Common myeloid progenitor, CD34-positive (primary cell): ENCODE measurements at regions of chr7 and their contacts with region 1.

Region 1: GRCh38 chr7:37719077-37719476 is 35.5 kb downstream of the GPR141 start:
- DNase-seq: no peak
- H3K4me3 ChIP-seq: no peak overlapping the region
- H3K27ac ChIP-seq: no peak overlapping the region
- H3K4me1 ChIP-seq: peaks cover 0 to 4% (median 0%) of the 10 kb centered on the region in 4 experiments
- H3K27me3 ChIP-seq: no peaks in the 10 kb centered on the region

Region 2: DNA sequence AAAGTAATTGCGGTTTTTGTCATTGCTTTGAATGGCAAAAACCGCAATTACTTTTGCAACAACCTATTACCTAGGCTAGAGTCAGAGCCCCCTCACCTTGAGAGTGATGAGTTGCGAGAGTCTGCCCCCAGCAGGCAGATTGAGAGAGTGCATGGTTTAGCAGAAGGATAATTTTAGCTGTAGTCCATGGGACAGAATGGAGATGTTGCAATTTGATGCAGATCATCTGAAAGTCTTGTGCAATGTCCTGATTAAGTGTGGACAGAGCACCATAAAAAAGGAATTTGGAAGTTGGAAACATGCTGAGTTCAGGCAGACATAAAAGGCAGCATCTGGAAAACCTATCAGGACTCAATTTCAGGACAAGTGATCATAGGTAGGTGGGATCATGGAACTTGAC is 13.2 kb after region 1 on chr7:
- CTCF ChIA-PET with region 1: interaction called, 10 read pairs
- POLR2A ChIA-PET with region 1: no interaction called
- DNase-seq: peak; percentile 59 to 86 (median 84)
- H3K4me3 ChIP-seq: peak overlapping the region in 2 of 7 experiments; percentile 23 to 43
- H3K27ac ChIP-seq: no peak overlapping the region
- H3K4me1 ChIP-seq: peaks cover 2 to 7% (median 4%) of the 10 kb centered on the region in 4 experiments
- H3K27me3 ChIP-seq: no peaks in the 10 kb centered on the region